ENCODE measurements at regions of chr1 and their contacts with region 1.

Region 1: DNA sequence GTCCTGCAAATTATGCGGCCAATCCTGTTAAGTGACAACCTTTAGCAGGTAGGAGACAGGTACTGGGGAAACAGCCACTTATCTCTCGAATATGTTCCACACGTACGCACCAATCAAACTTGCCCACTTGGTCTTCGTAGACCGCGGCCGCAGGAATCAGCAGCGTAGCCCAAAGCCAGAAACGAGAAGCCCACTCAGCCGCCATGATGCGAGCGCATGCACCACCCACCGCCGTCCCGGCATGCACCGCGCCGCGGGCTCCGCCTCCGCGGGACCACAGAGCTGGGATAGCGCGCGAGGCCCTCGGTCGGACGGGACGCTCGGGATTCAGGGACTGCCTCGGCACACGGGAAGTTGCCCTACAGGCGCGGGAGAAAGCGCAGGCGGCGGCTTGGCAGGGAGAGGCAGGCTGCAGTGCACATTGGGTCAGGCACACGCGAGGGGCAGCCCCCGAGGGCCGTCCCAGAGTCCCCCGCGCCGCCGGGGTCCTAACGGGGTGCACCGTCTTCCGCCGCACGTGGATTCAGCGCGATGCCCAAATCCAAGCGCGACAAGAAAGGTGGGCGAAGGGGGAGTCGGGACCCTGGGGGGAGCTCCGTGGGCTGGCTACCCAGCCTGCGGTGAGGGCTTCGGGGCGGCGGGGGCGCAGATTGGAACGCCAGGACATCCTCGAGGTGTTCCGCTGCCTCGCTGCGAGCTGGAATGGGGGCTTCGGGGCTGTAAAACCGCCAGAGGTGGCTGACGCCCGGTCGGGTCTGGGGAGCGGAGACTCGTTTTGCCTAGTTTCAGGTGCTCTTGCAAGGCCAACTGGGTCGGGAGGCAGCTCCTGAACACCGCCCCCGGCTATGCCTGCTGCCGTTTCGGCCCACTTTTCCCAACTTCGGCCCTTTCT is at the starts of genes EMC1 and MRTO4:
- DNase-seq: peak; percentile 83 to 96 (median 92)
- ATAC-seq: peak; percentile 97
- H3K4me3 ChIP-seq: peak within 1 kb of the TSS; percentile 92
- H3K4me3 Mint-ChIP-seq: peak within 1 kb of the TSS; percentile 91 to 98 (median 96)
- H3K27ac ChIP-seq: peak within 1 kb of the TSS; percentile 91
- H3K27ac Mint-ChIP-seq: peak within 1 kb of the TSS; percentile 91 to 97 (median 95)
- H3K4me1 ChIP-seq: peaks cover 26 to 30% of the 10 kb centered on the region in 2 donors
- H3K4me1 Mint-ChIP-seq: peaks cover 20 to 46% (median 29%) of the 10 kb centered on the region in 7 donors
- H3K27me3 ChIP-seq: no peaks in the 10 kb centered on the region
- H3K27me3 Mint-ChIP-seq: no peaks in the 10 kb centered on the region
- total RNA-seq, gene EMC1: 29.8 to 43.7 (median 37.1) TPM
- total RNA-seq, gene MRTO4: 17.1 to 42.3 (median 22.4) TPM

Region 2: DNA sequence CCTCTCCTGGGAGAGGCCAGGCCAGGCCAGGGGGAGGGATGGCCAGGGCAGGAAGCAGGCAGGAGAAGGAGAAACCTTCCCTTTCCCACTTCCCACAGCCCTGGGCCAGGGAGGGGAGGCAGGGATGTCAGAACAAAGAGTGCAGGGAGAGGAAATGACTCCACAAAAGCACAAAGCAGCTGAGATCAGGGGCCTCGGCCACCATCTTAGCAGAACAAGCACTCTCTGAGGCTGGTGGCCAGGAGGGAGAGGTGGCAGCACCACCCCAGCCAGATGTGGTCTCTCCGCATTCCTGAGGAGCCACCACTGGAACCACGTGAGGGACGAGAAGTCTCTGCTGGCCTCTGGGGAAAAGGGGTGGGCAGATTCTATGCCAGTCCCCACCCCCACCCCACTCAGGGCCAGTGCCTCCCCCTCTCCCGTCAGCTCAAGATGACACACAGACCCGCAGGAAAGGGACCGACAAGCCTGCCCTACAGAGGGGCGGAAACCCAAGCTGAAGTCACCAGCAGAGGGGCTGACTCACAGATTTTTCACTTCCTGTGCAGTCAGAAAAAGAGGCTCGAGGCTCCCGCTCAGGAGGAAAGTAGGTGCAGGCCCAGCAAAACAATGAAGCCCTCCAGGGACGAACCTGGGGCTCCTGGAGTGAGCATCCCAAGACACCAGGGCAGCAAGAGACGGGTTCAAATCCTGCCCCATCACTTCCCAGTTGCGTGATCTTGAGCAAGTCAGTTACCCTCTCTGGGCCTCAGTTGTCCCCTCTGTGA is 325.1 kb before region 1 on chr1:
- CTCF ChIA-PET with region 1: no interaction called
- POLR2A ChIA-PET with region 1: no interaction called
- intact Hi-C with region 1: loop called in 1 of 2 experiments (anchors 1 kb)
- DNase-seq: peak; percentile 43 to 84 (median 73)
- ATAC-seq: peak; percentile 86
- H3K4me3 ChIP-seq: peak overlapping the region; percentile 84
- H3K4me3 Mint-ChIP-seq: peak overlapping the region; percentile 73 to 93 (median 83)
- H3K27ac ChIP-seq: peak overlapping the region; percentile 71
- H3K27ac Mint-ChIP-seq: peak overlapping the region; percentile 57 to 99 (median 95)
- H3K4me1 ChIP-seq: peaks cover 58 to 73% of the 10 kb centered on the region in 2 donors
- H3K4me1 Mint-ChIP-seq: peaks cover 34 to 90% (median 80%) of the 10 kb centered on the region in 7 donors
- H3K27me3 ChIP-seq: no peaks in the 10 kb centered on the region
- H3K27me3 Mint-ChIP-seq: no peaks in the 10 kb centered on the region

Region 3: DNA sequence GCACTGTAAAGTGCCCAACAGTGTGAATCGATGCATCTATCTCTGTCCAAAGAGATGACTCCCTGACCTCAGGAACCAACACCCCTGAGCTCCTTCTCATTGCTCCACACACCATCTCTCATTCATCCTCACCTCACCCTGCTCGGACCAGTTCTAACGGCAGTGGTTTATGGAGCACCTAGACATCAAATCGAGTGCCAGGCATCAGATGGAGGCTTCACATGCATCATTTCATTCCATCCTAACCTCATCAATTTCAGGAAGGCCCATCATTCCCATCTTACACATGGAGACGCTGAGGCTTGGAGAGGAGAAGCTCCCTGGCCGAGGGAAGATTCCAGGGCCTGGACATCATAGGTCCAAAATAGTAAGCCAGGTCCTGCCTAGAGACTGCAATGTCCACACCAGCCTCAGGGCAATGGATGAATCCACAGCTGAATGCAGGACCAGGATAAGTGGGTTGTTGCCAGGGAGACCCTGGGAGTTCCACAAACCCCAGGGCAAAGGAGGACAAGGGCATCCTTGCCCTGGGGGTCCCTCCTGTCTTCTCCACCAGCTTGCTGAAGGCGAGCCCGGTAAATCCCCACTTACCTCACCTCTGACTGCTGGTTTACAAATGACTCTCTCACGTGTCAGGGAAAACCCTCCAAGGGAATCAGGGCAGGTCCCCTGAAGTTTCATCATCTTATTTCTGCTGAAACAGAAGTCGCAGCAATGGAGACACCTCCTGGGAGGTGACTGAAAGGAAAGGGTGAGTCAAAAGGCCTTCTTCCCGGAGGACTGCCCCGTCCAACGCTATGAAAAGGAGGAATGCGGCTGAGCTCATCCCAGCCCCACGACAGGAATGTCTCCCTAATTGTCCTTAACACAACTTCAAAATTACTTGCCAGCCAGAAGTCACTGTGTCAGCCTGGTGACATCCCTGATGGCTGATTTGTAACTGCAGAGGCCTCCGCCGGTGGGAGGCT is 286.1 kb before region 1 on chr1:
- CTCF ChIA-PET with region 1: no interaction called
- POLR2A ChIA-PET with region 1: no interaction called
- intact Hi-C with region 1: no loop called
- DNase-seq: no peak
- ATAC-seq: no peak
- H3K4me3 ChIP-seq: no peak overlapping the region
- H3K4me3 Mint-ChIP-seq: no peak overlapping the region
- H3K27ac ChIP-seq: no peak overlapping the region
- H3K27ac Mint-ChIP-seq: peak overlapping the region in 1 of 9 donors; percentile 48
- H3K4me1 ChIP-seq: no peaks in the 10 kb centered on the region
- H3K4me1 Mint-ChIP-seq: peaks cover 0 to 6% (median 2%) of the 10 kb centered on the region in 7 donors
- H3K27me3 ChIP-seq: no peaks in the 10 kb centered on the region
- H3K27me3 Mint-ChIP-seq: peaks cover 0 to 34% (median 0%) of the 10 kb centered on the region in 5 donors

Region 4: DNA sequence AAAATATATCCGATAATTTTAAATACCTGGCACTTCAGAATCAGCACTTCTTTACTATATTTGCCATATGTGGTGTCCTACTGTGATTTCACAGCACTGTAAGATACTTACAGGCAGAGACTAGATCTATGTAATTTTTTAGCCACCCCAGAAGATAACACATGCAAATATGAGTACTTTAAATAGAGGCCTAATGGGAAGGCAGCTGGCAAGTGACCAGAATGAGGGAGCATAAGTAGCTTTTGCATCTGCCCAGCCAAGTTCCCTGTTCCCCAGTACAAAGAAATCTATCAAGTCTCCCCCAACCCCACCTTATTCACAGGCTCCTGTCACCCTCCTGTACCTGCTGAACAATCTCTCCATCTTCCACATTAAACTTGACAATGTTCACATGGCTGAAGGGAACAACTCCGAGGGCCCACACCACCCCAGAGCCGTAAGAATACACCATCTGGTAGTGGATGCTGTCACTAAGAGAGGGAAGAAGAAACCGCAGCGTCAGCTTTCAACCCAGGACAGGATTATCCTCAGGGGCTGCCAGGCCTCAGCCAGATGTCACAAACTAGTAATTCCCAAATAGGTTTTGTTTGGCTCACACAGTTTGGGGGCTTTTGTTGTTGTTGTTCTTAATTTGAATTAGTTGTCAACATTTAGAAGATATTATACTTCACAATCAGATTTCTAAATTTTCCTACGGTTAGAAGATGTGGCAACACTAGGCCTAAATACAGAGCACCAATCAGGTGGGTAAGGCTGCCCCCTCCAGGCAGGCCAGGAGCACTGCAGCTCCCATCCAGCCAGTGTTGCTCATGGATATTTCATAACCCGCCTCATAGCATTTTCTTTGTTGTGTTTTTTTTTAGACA is 10.6 kb before region 1 on chr1:
- CTCF ChIA-PET with region 1: interaction called, 8 read pairs
- POLR2A ChIA-PET with region 1: interaction called, 3 read pairs
- intact Hi-C with region 1: loop called in 1 of 2 experiments (anchors 1 kb)
- DNase-seq: peak; percentile 36 to 79 (median 68)
- ATAC-seq: peak; percentile 100
- H3K4me3 ChIP-seq: no peak overlapping the region
- H3K4me3 Mint-ChIP-seq: no peak overlapping the region
- H3K27ac ChIP-seq: peak overlapping the region; percentile 36
- H3K27ac Mint-ChIP-seq: peak overlapping the region in 5 of 9 donors; percentile 28 to 62 (median 56)
- H3K4me1 ChIP-seq: no peaks in the 10 kb centered on the region
- H3K4me1 Mint-ChIP-seq: peaks cover 0 to 4% (median 0%) of the 10 kb centered on the region in 7 donors
- H3K27me3 ChIP-seq: no peaks in the 10 kb centered on the region
- H3K27me3 Mint-ChIP-seq: no peaks in the 10 kb centered on the region

Region 5: DNA sequence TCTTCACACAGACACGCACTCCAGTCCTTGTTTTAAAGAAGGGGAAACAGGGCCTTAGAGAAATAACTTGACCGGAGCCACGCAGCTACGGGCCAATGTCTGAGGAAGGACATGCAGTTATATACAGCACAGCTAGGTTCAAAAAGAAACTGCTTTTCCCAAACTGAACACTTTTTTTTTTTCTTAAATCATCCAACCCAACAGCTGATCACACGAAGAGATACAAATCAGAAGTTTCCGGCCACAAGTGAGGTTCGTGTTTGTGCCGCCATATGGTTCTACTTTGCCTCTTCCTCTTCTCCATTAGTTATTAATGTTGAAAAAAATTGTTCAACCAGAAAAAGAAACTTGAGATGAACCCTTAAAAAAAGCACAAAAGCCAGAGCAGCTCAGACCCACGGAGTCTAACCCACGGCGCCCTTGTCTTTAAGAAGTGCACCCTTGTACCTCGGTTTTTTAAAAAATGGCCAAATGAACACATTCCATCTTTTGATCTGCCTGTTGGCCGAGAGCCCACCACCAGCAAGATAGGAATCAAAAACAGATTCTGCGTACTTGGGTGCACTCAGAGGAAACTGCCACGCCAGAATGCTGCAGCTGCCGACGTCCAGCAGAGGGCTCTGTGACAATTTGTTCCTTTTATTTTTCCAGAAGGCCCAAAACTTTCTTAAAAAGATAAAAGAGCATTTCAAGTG is 139.5 kb after region 1 on chr1:
- CTCF ChIA-PET with region 1: no interaction called
- POLR2A ChIA-PET with region 1: no interaction called
- intact Hi-C with region 1: loop called in 1 of 2 experiments (anchors 1 kb)
- DNase-seq: peak; percentile 33 to 84 (median 76)
- ATAC-seq: peak; percentile 84
- H3K4me3 ChIP-seq: peak overlapping the region; percentile 46
- H3K4me3 Mint-ChIP-seq: peak overlapping the region; percentile 78 to 90 (median 84)
- H3K27ac ChIP-seq: peak overlapping the region; percentile 60
- H3K27ac Mint-ChIP-seq: peak overlapping the region; percentile 82 to 98 (median 94)
- H3K4me1 ChIP-seq: peaks cover 39 to 47% of the 10 kb centered on the region in 2 donors
- H3K4me1 Mint-ChIP-seq: peaks cover 58 to 91% (median 83%) of the 10 kb centered on the region in 7 donors
- H3K27me3 ChIP-seq: no peaks in the 10 kb centered on the region
- H3K27me3 Mint-ChIP-seq: no peaks in the 10 kb centered on the region

Region 6: GRCh38 chr1:19799877-19800804 is 548.6 kb after region 1 on chr1 and contains the start of gene TMCO4:
- CTCF ChIA-PET with region 1: no interaction called
- POLR2A ChIA-PET with region 1: no interaction called
- intact Hi-C with region 1: loop called in 1 of 2 experiments (anchors 2 kb)
- DNase-seq: peak in 8 of 9 donors; percentile 26 to 64 (median 58)
- ATAC-seq: peak; percentile 68
- H3K4me3 ChIP-seq: peak within 1 kb of the TSS; percentile 66
- H3K4me3 Mint-ChIP-seq: peak within 1 kb of the TSS; percentile 88 to 98 (median 93)
- H3K27ac ChIP-seq: peak within 1 kb of the TSS; percentile 66
- H3K27ac Mint-ChIP-seq: peak within 1 kb of the TSS; percentile 93 to 99 (median 98)
- H3K4me1 ChIP-seq: peaks cover 0 to 10% of the 10 kb centered on the region in 2 donors
- H3K4me1 Mint-ChIP-seq: peaks cover 5 to 35% (median 33%) of the 10 kb centered on the region in 7 donors
- H3K27me3 ChIP-seq: no peaks in the 10 kb centered on the region
- H3K27me3 Mint-ChIP-seq: peaks cover 0 to 8% (median 0%) of the 10 kb centered on the region in 5 donors
- total RNA-seq, gene TMCO4: 16.6 to 28.3 (median 18.2) TPM

Measured in naive thymus-derived CD4-positive, alpha-beta T cell (primary cell).